ENCODE measurements at regions of chr12 and their contacts with region 1.

Region 1: GRCh38 chr12:53295070-53295890 is at the start of gene PFDN5:
- DNase-seq: peak; percentile 82
- ATAC-seq: peak; percentile 89
- H3K4me3 Mint-ChIP-seq: peak within 1 kb of the TSS; percentile 98
- H3K27ac Mint-ChIP-seq: peak within 1 kb of the TSS; percentile 92
- H3K4me1 Mint-ChIP-seq: peaks cover 36% of the 10 kb centered on the region
- H3K27me3 Mint-ChIP-seq: no peaks in the 10 kb centered on the region
- total RNA-seq, gene PFDN5: 388 to 425 TPM

Region 2: GRCh38 chr12:53251477-53252348 is 43.6 kb before region 1 on chr12:
- POLR2A ChIA-PET with region 1: no interaction called
- DNase-seq: peak; percentile 85
- ATAC-seq: peak; percentile 85
- H3K4me3 Mint-ChIP-seq: peak overlapping the region; percentile 98
- H3K27ac Mint-ChIP-seq: peak overlapping the region; percentile 95
- H3K4me1 Mint-ChIP-seq: peaks cover 41% of the 10 kb centered on the region
- H3K27me3 Mint-ChIP-seq: no peaks in the 10 kb centered on the region

Region 3: DNA sequence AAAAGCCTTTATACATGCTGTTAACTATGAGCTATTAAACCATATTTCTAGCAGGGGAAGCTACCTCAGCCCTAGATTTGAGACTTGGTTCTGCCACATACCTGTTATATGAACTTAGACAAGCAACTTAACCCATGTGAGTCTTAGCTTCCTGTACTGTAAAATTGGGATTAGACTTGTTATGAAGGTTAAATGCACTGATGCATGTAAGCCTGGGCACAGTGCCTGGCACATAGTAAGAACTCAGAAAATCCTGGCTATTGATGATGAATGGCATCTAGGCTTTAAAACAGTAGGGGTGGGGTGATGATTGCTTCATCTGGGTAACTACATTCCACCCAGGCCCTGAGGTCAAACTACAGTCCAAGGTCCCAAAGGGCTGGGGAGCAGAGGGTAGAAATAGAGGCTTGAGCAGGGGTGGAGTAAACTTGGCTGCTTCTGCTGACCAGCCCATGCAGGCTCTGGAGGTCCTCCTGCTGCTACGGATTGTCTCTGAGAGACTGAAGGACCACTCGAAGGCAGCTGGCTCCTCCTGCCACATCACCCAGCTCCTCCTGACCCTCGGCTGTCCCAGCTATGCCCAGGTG is 15.9 kb before region 1 on chr12:
- POLR2A ChIA-PET with region 1: interaction called, 13 read pairs
- DNase-seq: no peak
- ATAC-seq: no peak
- H3K4me3 Mint-ChIP-seq: no peak overlapping the region
- H3K27ac Mint-ChIP-seq: no peak overlapping the region
- H3K4me1 Mint-ChIP-seq: peaks cover 11% of the 10 kb centered on the region
- H3K27me3 Mint-ChIP-seq: no peaks in the 10 kb centered on the region

Region 4: DNA sequence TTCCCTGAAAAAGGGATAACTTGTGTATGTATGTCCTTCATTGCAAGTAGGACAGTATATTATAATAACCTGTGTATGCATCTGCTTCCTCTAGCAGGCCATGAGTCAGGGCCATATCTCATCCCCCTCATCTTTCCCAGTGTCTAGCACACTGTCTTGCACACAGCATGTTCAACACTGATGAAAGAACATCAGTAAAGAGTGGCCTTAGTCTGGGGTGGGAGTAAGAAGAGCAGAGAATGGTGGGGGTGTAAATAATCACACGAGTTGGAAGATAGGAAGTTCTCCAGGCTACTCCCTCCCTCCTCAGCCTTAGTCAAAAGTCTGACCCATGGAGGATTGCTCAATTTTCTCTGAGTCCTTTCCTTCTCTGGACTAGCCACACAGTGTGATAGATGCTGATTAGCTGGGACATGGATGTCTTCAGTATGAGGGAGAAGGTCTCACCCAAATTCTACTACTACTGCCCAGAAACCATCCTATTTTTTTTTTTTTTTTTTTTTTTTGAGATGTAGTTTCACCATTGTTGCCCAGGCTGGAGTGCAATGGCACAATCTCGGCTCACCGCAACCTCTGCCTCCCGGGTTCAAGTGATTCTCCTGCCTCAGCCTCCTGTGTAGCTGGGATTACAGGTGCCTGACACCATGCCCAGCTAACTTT is 70.1 kb after region 1 on chr12:
- POLR2A ChIA-PET with region 1: no interaction called
- DNase-seq: no peak
- ATAC-seq: no peak
- H3K4me3 Mint-ChIP-seq: no peak overlapping the region
- H3K27ac Mint-ChIP-seq: peak overlapping the region; percentile 47
- H3K4me1 Mint-ChIP-seq: peaks cover 8% of the 10 kb centered on the region
- H3K27me3 Mint-ChIP-seq: no peaks in the 10 kb centered on the region